PC-9 (cell line): ENCODE measurements at regions of chr16 and their contacts with region 1.

Region 1: DNA sequence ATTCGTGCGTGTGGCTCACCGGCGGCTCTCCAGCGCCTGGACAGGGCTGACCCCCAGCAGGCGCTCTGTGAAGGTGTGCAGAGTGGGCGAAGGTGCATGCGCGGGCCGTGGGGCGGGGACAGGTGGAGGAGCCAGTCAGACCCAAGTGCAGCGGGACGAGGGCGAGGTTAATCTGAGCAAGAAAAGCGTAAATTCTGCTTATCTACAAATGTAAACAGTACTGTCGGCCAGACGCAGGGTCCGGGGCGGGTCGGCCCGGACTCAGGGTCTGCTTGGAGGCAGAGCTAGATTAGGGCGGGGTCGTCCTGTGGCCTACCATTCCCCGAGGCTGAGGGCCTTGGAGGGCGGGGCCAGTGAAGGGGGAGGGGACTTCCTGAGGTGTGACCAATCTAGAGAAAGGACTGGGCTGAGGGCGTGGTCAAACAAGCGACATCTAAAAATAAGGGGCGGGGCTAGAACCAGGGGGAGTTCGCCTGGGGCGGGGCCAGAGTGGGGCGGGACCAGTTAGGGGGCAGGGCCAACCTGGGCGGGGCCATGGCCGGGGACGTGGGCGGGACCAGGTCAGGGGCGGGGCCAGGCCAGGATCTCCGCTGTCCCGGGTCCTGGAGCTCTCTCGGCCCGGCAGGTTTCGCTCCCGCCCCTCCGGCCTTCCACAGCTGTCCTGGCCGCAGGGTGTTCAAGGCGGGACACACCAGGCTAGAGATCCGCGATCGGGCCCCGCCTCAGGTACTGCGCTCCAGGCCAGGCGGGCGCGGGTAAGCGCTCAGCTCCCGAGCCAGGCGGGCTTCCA is at the start of gene SEC14L5:
- DNase-seq: peak; percentile 88 to 99
- H3K4me3 ChIP-seq: peak within 1 kb of the TSS; percentile 69
- H3K27ac ChIP-seq: peak within 1 kb of the TSS; percentile 17; the same call in 1 of the 2 replicates
- H3K4me1 ChIP-seq: peaks cover 10% of the 10 kb centered on the region
- H3K27me3 ChIP-seq: peaks cover 26% of the 10 kb centered on the region
- CTCF ChIP-seq: no peak
- total RNA-seq, gene SEC14L5: 1.1 and 1.8 TPM in 2 replicates

Region 2: DNA sequence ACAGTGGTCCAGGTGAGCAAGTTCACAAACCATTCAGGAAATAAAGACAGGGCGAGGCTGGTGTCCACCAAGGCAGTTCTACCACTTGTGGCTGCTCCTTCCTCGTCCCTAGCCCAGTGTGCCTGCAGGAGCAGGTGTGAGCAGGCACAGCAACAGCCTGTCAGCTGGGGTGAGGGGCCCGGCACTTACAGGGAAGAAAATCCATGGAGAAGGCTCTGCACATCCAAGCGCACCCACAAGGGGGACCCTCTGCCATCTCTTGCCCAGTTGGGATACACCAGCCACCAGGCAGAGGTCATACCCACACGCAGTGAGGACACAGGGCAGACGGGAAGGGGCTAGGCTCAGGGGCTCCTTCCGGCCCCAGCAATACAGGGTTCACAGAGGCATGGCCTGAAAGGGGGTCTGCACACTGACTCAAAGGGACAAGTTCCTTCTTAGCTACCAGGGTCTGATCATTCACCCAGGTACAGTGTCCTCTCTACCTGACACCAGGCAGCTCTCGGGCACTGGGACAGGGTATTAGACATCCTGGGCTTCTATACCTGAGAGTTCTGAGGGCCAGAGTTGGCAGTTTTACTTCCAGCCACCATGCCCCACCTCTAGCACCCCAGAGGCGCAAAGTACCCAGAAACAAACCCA is 446.4 kb before region 1 on chr16:
- CTCF ChIA-PET with region 1: no interaction called
- POLR2A ChIA-PET with region 1: no interaction called
- intact Hi-C with region 1: loop called (anchors 2 kb)
- DNase-seq: peak; percentile 64 to 74
- H3K4me3 ChIP-seq: no peak overlapping the region
- H3K27ac ChIP-seq: no peak overlapping the region
- H3K4me1 ChIP-seq: no peaks in the 10 kb centered on the region
- H3K27me3 ChIP-seq: no peaks in the 10 kb centered on the region
- CTCF ChIP-seq: peak; percentile 70

Region 3: DNA sequence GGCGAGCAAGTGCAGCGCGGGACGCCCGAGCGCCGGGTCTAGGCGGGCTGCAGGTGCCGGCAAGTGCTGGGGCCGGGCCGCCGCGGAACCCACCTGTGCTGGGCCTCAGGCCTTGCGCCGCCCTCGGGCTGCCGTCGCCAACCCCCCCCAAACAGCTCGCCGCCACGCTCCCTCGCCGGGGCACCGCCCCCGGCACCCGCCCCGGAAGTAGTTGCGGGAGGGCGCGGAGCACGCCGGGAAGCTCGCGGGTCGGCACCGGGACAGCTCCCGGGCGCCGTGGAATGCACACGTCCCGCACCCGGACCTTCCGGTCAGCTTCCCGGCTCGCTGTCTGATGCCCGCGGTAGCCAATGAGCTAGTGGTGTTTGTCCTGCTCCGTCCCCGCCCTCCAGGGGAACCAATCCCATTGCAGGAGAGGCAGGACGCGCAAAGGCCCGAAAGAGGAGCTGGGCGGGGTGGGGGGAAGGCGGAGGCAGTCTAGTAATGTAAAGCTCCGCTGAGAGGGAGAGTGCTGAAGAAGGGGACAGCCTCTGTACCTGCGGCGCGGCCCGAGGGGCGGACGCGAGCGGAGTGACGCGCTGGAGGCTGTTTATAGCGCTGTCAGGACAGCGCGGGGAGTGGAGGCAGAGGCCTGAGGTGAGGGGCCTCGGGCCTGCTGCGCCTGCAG is 223.7 kb before region 1 on chr16 and contains the starts of genes ANKS3 and DNAAF8:
- CTCF ChIA-PET with region 1: no interaction called
- POLR2A ChIA-PET with region 1: interaction called, 6 read pairs
- intact Hi-C with region 1: loop called (anchors 5 kb)
- DNase-seq: peak; percentile 93 to 97
- H3K4me3 ChIP-seq: peak within 1 kb of the TSS; percentile 83
- H3K27ac ChIP-seq: peak within 1 kb of the TSS; percentile 52
- H3K4me1 ChIP-seq: peaks cover 12% of the 10 kb centered on the region
- H3K27me3 ChIP-seq: no peaks in the 10 kb centered on the region
- CTCF ChIP-seq: no peak
- total RNA-seq, gene ANKS3: 32.8 and 35.0 TPM in 2 replicates
- total RNA-seq, gene DNAAF8: 1.8 and 2.4 TPM in 2 replicates

Region 4: GRCh38 chr16:4846891-4847773 is 110.8 kb before region 1 on chr16 and contains the starts of genes GLYR1 and UBN1:
- CTCF ChIA-PET with region 1: no interaction called
- POLR2A ChIA-PET with region 1: interaction called, 3 read pairs
- intact Hi-C with region 1: loop called (anchors 1 kb)
- DNase-seq: peak; percentile 89 to 100
- H3K4me3 ChIP-seq: peak within 1 kb of the TSS; percentile 94
- H3K27ac ChIP-seq: 0 out of 2 replicates have a peak within 1 kb of the TSS, but pooled peaks have one; percentile 16
- H3K4me1 ChIP-seq: peaks cover 47% of the 10 kb centered on the region
- H3K27me3 ChIP-seq: no peaks in the 10 kb centered on the region
- CTCF ChIP-seq: no peak
- total RNA-seq, gene GLYR1: 97.5 and 135 TPM in 2 replicates
- total RNA-seq, gene UBN1: 42.7 and 44.1 TPM in 2 replicates

Region 5: GRCh38 chr16:4936991-4937781 is 20.7 kb before region 1 on chr16 and contains the start of gene PPL:
- CTCF ChIA-PET with region 1: interaction called, 3 read pairs
- POLR2A ChIA-PET with region 1: no interaction called
- intact Hi-C with region 1: loop called (anchors 1 kb)
- DNase-seq: peak; percentile 87 to 100
- H3K4me3 ChIP-seq: peak within 1 kb of the TSS; percentile 99
- H3K27ac ChIP-seq: peak within 1 kb of the TSS; percentile 38; the same call in 1 of the 2 replicates
- H3K4me1 ChIP-seq: peaks cover 36% of the 10 kb centered on the region
- H3K27me3 ChIP-seq: no peaks in the 10 kb centered on the region
- CTCF ChIP-seq: no peak
- total RNA-seq, gene PPL: 184 and 187 TPM in 2 replicates